Panc1 (cell line): ENCODE measurements at regions of chr1 and their contacts with region 1.

Region 1: DNA sequence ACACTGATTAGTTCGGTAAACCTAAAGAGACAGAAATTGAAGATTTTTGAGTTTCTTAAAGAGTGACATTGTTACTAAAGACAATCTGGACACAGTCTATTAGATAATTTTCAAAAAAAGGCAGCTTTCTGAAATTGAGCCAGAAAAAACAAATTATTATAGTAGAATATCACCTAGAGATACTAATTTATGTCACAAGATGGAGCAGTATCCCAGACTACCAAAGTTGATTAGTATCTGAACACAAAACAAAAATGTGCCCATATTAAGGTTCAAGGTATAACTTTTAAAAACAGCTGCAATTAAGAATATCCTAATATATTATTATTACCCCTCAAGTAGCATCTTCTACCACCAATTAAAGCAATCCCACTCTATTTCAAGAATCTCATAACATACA is 40.5 kb upstream of the SYT2 start:
- DNase-seq: no peak
- ATAC-seq: no peak
- H3K4me3 ChIP-seq: no peak overlapping the region
- H3K27ac ChIP-seq: no peak overlapping the region
- H3K4me1 ChIP-seq: no peaks in the 10 kb centered on the region
- H3K27me3 ChIP-seq: no peaks in the 10 kb centered on the region
- CTCF ChIP-seq: no peak

Region 2: DNA sequence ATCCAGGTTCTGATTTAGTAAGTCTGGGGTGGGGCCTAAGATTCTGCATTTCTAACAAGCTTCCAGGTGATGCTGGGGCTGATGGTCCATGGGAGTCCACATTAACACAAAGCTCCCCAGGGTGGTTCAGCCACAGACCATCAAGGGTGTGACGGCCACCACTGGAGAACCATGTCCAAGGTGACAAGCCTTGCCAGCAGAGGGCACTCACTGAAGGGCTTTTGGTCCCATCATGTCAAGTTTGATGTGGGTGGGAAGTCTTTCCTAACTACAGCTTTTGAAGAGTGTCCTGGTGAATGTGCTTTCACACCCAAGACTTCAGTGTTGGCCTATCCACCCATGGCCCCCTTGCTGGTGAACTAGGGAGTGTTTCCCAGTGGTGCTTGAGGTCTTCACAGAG is 476.1 kb before region 1 on chr1:
- CTCF ChIA-PET with region 1: no interaction called
- POLR2A ChIA-PET with region 1: no interaction called
- in situ Hi-C with region 1: no loop called
- intact Hi-C with region 1: no loop called
- DNase-seq: no peak
- ATAC-seq: no peak
- H3K4me3 ChIP-seq: no peak overlapping the region
- H3K27ac ChIP-seq: no peak overlapping the region
- H3K4me1 ChIP-seq: no peaks in the 10 kb centered on the region
- H3K27me3 ChIP-seq: peaks cover 4% of the 10 kb centered on the region; the same call in 1 of the 2 replicates
- CTCF ChIP-seq: peak; percentile 66; the same call in 1 of the 2 replicates

Region 3: GRCh38 chr1:202786804-202787203 is 36.0 kb after region 1 on chr1:
- CTCF ChIA-PET with region 1: no interaction called
- POLR2A ChIA-PET with region 1: interaction called, 10 read pairs
- in situ Hi-C with region 1: no loop called
- intact Hi-C with region 1: no loop called
- DNase-seq: no peak
- ATAC-seq: no peak
- H3K4me3 ChIP-seq: no peak overlapping the region
- H3K27ac ChIP-seq: no peak overlapping the region
- H3K4me1 ChIP-seq: peaks cover 4% of the 10 kb centered on the region; the same call in 1 of the 2 replicates
- H3K27me3 ChIP-seq: no peaks in the 10 kb centered on the region
- CTCF ChIP-seq: no peak

Region 4: DNA sequence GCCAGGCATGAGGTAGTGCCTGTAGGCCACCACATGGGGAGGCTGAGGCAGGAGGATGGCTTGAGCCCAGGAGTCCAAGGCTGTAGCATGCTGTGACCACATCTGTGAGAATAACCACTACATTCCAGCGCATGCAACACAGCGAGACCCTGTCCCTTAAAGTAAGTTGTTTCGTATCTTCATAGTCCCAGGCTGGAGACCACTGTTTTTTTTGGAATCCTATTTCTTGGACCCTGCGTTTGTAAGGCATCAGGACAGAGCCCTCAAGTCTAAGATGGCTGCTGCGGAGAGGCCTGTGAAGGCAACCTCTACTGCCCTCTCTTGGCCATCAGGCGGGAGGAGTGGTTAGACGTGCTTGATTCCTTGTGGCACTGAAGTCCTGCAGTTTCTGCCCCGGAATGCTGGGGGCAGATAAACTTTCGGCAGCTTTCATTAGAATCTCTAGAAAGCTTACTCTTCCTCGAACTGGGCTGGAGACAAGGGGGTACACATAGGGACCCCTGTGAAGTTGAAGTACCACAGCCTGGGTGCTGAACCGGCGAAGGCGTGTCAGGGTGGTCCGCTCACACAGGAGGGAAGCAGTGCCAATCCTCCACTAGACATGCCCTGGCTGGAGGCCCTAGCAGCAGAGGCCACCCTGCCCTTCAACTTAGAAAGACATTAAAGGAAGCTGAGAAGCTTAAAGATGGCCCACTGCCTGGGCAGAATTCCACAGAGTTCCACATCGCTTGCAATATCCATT is 101.6 kb after region 1 on chr1:
- CTCF ChIA-PET with region 1: no interaction called
- POLR2A ChIA-PET with region 1: no interaction called
- in situ Hi-C with region 1: no loop called
- intact Hi-C with region 1: loop called (anchors 10 kb)
- DNase-seq: peak; percentile 39
- ATAC-seq: peak; percentile 96
- H3K4me3 ChIP-seq: no peak overlapping the region
- H3K27ac ChIP-seq: no peak overlapping the region
- H3K4me1 ChIP-seq: no peaks in the 10 kb centered on the region
- H3K27me3 ChIP-seq: no peaks in the 10 kb centered on the region
- CTCF ChIP-seq: peak; percentile 90